AG04450 (cell line): ENCODE measurements at regions of chr22 and their contacts with region 1.

Region 1: GRCh38 chr22:32985899-32986765 is 72.0 kb downstream of the SYN3 start:
- DNase-seq: peak; percentile 44
- H3K4me3 ChIP-seq: no peak overlapping the region
- H3K27ac ChIP-seq: no peak overlapping the region
- H3K27me3 ChIP-seq: peaks cover 6% of the 10 kb centered on the region
- CTCF ChIP-seq: peak; percentile 92

Region 2: DNA sequence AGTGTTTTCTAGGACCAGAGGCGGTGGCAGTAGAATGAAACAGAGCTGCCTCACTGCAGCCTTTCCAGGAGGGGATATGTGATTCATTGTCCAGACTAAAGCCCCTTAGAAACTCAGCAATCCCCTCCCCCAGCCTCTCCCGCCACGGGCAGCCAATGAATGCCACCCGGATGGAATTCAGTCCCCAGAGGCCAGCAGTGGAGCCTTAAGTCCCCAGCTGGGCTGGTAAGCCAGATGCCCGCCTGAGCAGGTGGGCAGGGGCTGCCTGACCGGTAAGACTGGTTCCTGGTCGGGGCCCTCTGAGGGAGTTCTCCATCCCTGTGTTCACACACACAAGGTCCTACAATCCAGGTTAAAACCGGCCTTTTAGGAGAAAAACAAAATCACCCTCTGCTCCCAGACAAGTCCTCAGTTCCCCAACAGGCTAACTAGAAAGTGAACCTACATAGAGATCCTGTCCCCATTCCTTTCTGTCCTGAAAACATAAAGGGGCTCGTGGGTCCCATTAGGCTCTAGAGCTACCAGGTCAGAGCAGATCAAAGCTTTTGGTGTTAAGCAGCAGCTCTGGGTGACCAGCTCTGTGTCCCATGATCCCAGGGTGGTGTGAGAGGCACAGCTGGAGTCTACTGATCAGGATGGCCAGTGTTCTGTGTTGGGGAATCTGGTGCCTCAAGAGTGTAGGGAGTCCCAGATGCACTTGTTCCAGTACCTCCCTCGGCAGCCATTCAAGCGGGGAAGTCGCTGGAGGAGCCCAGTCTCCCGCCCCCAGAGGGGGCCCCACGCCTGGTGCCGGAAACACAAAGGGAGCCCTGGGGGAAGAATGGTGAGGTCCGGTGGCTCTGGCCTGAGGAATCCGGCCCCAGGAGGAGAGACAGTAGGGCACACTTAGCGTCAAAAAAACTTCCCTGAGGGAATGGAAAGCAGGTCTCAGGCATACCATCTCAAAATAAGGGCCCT is 1642.6 kb before region 1 on chr22:
- CTCF ChIA-PET with region 1: no interaction called
- POLR2A ChIA-PET with region 1: no interaction called
- DNase-seq: no peak
- H3K4me3 ChIP-seq: peak overlapping the region; percentile 50
- H3K27ac ChIP-seq: no peak overlapping the region
- H3K27me3 ChIP-seq: no peaks in the 10 kb centered on the region
- CTCF ChIP-seq: no peak

Region 3: DNA sequence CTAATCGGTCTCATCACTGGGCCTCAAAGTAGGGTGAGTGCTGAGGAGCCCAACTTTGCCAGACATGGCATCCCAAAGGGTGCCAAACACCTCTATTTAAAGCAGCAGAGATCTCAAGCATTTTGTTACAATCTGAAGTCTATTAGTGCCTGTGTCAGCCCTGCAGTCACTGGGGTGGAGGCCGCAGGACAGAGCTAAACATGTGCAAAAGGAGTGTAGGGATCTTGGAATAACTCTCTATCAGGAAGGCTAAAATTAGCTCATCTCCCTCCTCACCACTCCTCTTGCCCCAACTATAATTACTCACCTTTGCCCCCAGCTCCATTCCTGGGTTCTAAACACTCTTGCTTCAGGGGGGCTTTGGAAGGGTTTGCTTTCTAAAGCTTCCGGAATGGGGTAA is 97.2 kb before region 1 on chr22:
- CTCF ChIA-PET with region 1: interaction called, 11 read pairs
- POLR2A ChIA-PET with region 1: no interaction called
- DNase-seq: no peak
- H3K4me3 ChIP-seq: no peak overlapping the region
- H3K27ac ChIP-seq: no peak overlapping the region
- H3K27me3 ChIP-seq: peaks cover 30% of the 10 kb centered on the region
- CTCF ChIP-seq: no peak

Region 4: DNA sequence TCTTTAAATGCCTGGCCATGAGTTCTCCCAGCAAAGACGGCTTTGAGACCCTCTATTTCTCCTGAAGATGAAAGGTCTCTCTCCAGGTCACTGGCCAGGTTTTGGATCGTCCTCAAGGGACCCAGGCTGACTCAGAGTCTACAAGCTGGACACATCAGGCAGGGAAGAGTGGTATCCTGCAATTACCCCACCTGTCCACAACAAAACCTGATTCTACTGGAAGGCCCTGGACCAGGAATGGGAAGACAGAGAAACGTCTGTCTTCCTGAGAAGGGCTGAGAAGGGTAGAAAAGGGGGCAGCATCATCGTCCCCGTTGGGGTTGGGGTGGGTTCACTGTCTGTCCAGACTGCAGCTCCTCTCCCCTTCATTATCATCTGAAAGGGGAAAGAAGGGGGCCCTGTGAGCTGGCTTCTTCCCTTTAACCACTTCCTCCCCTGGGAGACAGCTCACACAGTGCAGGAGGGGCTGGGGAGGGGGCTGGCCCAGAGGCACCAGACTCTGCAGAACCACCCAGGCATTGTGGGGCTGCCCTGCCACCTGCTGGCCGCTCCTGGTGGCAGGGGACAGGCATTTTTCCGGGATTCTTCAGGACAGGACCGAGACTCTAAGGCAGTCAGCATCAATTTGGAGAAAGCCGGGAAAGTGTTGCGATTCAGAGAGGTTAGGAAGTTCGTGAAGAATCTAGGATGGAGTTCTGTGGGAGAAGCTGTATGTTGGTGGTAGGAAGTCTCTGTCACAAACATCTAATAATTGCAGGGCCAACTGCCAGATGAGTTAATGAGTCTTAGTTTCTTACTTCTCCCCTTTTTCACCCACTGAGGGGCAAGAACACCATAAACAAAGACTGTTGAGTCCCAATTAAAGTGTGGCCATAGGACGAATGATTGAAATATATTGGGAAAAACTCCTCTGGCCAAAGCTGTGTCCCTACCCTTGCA is 14.5 kb after region 1 on chr22:
- CTCF ChIA-PET with region 1: interaction called, 19 read pairs
- POLR2A ChIA-PET with region 1: no interaction called
- DNase-seq: no peak
- H3K4me3 ChIP-seq: no peak overlapping the region
- H3K27ac ChIP-seq: no peak overlapping the region
- H3K27me3 ChIP-seq: peaks cover 13% of the 10 kb centered on the region
- CTCF ChIP-seq: peak; percentile 91